Right ventricle myocardium inferior (tissue), 1 donor: ENCODE measurements at regions of chr1 and their contacts with region 1.

Region 1: DNA sequence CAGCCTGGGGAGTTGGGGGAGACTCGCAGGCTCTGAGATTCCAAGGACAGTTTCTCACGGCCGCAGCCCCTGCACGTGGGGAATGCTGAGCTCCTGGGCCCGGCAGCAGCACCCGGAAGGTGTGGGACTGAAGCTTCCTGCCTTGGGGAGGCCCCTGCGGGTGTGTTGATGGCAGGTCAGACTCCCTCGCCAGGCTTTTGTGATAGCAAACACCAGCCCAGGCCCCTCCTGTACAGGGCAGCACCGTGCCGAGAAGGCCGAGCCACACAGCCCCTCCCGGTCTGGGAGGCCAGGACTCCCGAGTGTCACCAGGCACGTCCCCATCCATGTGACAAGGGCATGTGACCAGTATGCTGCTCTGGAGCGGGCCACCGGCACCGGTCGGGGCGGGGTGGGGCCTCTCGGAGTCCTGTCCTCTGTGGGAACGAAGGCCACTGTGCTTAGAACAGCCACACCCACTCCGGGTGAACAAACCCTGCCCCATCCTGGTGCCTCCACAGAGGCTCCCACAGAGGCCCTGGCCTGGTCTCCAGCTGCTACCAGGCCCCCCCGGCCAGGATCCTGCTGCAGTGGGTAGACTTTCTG is 31.1 kb upstream of the ARHGEF16 start:
- DNase-seq: peak; percentile 91
- ATAC-seq: peak; percentile 92

Region 2: GRCh38 chr1:2412519-2413233 is 1010.7 kb before region 1 on chr1 and contains the start of gene PEX10:
- intact Hi-C with region 1: loop called (anchors 10 kb)
- DNase-seq: peak; percentile 99
- ATAC-seq: peak; percentile 97
- total RNA-seq, gene PEX10: 14.5 TPM

Region 3: GRCh38 chr1:2821966-2822620 is 601.2 kb before region 1 on chr1:
- intact Hi-C with region 1: loop called (anchors 1 kb)
- DNase-seq: peak; percentile 65
- ATAC-seq: peak; percentile 69

Region 4: GRCh38 chr1:2875707-2876561 is 547.4 kb before region 1 on chr1:
- intact Hi-C with region 1: loop called (anchors 1 kb)
- DNase-seq: no peak
- ATAC-seq: peak; percentile 46

Region 5: GRCh38 chr1:3012456-3013291 is 410.7 kb before region 1 on chr1:
- intact Hi-C with region 1: loop called (anchors 2 kb)
- DNase-seq: peak; percentile 79
- ATAC-seq: peak; percentile 78

Region 6: GRCh38 chr1:3069491-3070303 is 353.6 kb before region 1 on chr1:
- intact Hi-C with region 1: loop called (anchors 1 kb)
- DNase-seq: peak; percentile 55
- ATAC-seq: peak; percentile 39

Region 7: GRCh38 chr1:3352299-3352951 is 70.9 kb before region 1 on chr1:
- intact Hi-C with region 1: loop called (anchors 2 kb)
- DNase-seq: no peak
- ATAC-seq: no peak